Dendritic cell treated with granulocyte-macrophage colony-stimulating factor and Interleukin-4, amounts not matched to agents 40 ng/mL and 50 ng/mL, for 4 days (primary cell): ENCODE measurements at regions of chr10 and their contacts with region 1.

Region 1: DNA sequence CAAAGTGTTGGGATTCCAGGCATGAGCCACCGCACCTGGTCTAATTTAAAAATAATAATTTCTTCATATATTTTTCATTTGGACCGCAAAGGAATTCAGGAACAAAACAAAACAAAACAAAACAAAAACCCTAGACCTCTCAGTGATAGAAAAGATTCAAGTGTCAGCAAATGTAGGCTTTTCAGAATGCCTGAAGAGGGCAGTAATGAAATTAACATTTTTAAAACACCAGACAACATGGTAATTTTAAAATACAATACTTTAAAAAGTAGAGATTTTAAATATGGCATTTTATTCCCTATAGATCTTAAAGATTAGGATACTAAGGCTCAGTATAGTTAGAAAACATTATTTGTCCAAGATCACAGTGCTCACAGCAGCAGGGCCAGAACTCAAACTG is 36.6 kb downstream of the DNMBP start:
- H3K4me3 Mint-ChIP-seq: no peak overlapping the region
- H3K27ac Mint-ChIP-seq: no peak overlapping the region
- H3K4me1 Mint-ChIP-seq: peaks cover 17% of the 10 kb centered on the region
- H3K27me3 Mint-ChIP-seq: no peaks in the 10 kb centered on the region

Region 2: GRCh38 chr10:99993701-99994689 is 20.8 kb after region 1 on chr10:
- intact Hi-C with region 1: no loop called
- H3K4me3 Mint-ChIP-seq: peak overlapping the region; percentile 17
- H3K27ac Mint-ChIP-seq: peak overlapping the region; percentile 85
- H3K4me1 Mint-ChIP-seq: peaks cover 23% of the 10 kb centered on the region
- H3K27me3 Mint-ChIP-seq: no peaks in the 10 kb centered on the region

Region 3: GRCh38 chr10:100009793-100010676 is 36.8 kb after region 1 on chr10 and contains the start of gene DNMBP:
- intact Hi-C with region 1: loop called (anchors 2 kb)
- H3K4me3 Mint-ChIP-seq: peak within 1 kb of the TSS; percentile 88
- H3K27ac Mint-ChIP-seq: peak within 1 kb of the TSS; percentile 87
- H3K4me1 Mint-ChIP-seq: peaks cover 48% of the 10 kb centered on the region
- H3K27me3 Mint-ChIP-seq: peaks cover 15% of the 10 kb centered on the region

Region 4: GRCh38 chr10:100046021-100046486 is 72.9 kb after region 1 on chr10:
- intact Hi-C with region 1: loop called (anchors 5 kb)
- H3K4me3 Mint-ChIP-seq: no peak overlapping the region
- H3K27ac Mint-ChIP-seq: no peak overlapping the region
- H3K4me1 Mint-ChIP-seq: peaks cover 5% of the 10 kb centered on the region
- H3K27me3 Mint-ChIP-seq: no peaks in the 10 kb centered on the region